Activated B cell treated with CpG ODN at 0.5 μM for 24 hours (primary cell): ENCODE measurements at regions of chr9 and their contacts with region 1.

Region 1: GRCh38 chr9:27573634-27574590 is 631 bp upstream of the C9orf72 start:
- DNase-seq: peak; percentile 77
- ATAC-seq: peak; percentile 88
- H3K4me3 Mint-ChIP-seq: peak overlapping the region; percentile 97
- H3K27ac Mint-ChIP-seq: peak overlapping the region; percentile 99
- H3K4me1 Mint-ChIP-seq: peaks cover 24% of the 10 kb centered on the region
- H3K27me3 Mint-ChIP-seq: no peaks in the 10 kb centered on the region
- CTCF ChIP-seq: no peak

Region 2: GRCh38 chr9:26296910-26297572 is 1276.9 kb before region 1 on chr9:
- CTCF ChIA-PET with region 1: no interaction called
- POLR2A ChIA-PET with region 1: no interaction called
- intact Hi-C with region 1: no loop called
- DNase-seq: no peak
- ATAC-seq: no peak
- H3K4me3 Mint-ChIP-seq: no peak overlapping the region
- H3K27ac Mint-ChIP-seq: no peak overlapping the region
- H3K4me1 Mint-ChIP-seq: no peaks in the 10 kb centered on the region
- H3K27me3 Mint-ChIP-seq: no peaks in the 10 kb centered on the region
- CTCF ChIP-seq: no peak

Region 3: DNA sequence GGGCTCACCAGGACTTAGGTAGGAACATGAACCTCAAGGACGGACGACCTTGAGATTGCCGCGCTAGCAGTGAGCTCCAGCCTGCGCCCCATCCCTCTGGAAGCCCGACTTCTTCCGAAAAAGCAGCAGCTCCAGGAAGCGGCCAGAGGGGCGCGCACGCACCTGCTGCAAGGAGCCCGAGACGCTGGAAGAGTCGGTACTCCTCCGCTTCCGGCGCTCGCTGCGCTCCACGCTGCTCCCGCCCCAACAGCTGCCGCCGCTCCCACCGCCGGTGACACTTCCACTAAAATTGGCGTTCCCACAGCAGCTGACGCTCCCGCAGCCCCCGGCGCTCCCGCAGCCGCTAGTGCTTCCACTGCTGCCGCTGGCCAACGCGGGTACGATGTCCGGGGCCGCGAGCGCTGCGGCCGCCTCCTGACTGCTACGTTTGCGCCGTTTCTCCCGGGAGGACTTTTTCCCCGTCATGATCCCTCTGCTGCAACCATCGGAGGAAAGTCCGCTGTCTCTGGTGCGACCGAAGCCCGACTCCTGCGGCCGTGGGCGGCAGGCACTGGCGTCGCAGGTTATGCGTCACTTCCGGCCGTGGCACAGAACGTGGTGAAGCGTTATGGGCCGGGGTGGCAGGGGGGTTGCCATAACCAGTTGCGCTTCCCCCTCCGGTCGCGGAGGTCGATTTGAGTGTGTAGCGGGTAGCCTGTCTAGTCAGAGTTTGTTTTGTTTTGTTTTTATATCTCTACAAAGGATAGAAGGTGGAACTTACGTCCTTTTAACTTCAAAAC is 681.5 kb before region 1 on chr9 and contains the start of gene CAAP1:
- CTCF ChIA-PET with region 1: no interaction called
- POLR2A ChIA-PET with region 1: no interaction called
- intact Hi-C with region 1: loop called (anchors 2 kb)
- DNase-seq: peak; percentile 87
- ATAC-seq: peak; percentile 96
- H3K4me3 Mint-ChIP-seq: peak within 1 kb of the TSS; percentile 100
- H3K27ac Mint-ChIP-seq: peak within 1 kb of the TSS; percentile 98
- H3K4me1 Mint-ChIP-seq: peaks cover 44% of the 10 kb centered on the region
- H3K27me3 Mint-ChIP-seq: no peaks in the 10 kb centered on the region
- CTCF ChIP-seq: no peak
- total RNA-seq, gene CAAP1: 15.1 and 16.6 TPM in 2 replicates

Region 4: GRCh38 chr9:27162045-27162444 is 411.9 kb before region 1 on chr9:
- CTCF ChIA-PET with region 1: no interaction called
- POLR2A ChIA-PET with region 1: no interaction called
- intact Hi-C with region 1: no loop called
- DNase-seq: no peak
- ATAC-seq: no peak
- H3K4me3 Mint-ChIP-seq: no peak overlapping the region
- H3K27ac Mint-ChIP-seq: no peak overlapping the region
- H3K4me1 Mint-ChIP-seq: no peaks in the 10 kb centered on the region
- H3K27me3 Mint-ChIP-seq: peaks cover 2% of the 10 kb centered on the region
- CTCF ChIP-seq: no peak

Region 5: GRCh38 chr9:27489087-27489876 is 84.6 kb before region 1 on chr9:
- CTCF ChIA-PET with region 1: no interaction called
- POLR2A ChIA-PET with region 1: interaction called, 4 read pairs
- intact Hi-C with region 1: loop called (anchors 1 kb)
- DNase-seq: no peak
- ATAC-seq: peak; percentile 40
- H3K4me3 Mint-ChIP-seq: peak overlapping the region; percentile 20
- H3K27ac Mint-ChIP-seq: peak overlapping the region; percentile 46
- H3K4me1 Mint-ChIP-seq: peaks cover 78% of the 10 kb centered on the region
- H3K27me3 Mint-ChIP-seq: no peaks in the 10 kb centered on the region
- CTCF ChIP-seq: no peak

Region 6: GRCh38 chr9:27586304-27586703 is 12.4 kb after region 1 on chr9:
- CTCF ChIA-PET with region 1: no interaction called
- POLR2A ChIA-PET with region 1: interaction called, 13 read pairs
- intact Hi-C with region 1: loop called (anchors 1 kb)
- DNase-seq: no peak
- ATAC-seq: no peak
- H3K4me3 Mint-ChIP-seq: no peak overlapping the region
- H3K27ac Mint-ChIP-seq: no peak overlapping the region
- H3K4me1 Mint-ChIP-seq: peaks cover 25% of the 10 kb centered on the region
- H3K27me3 Mint-ChIP-seq: peaks cover 5% of the 10 kb centered on the region
- CTCF ChIP-seq: no peak

Region 7: GRCh38 chr9:27701587-27701986 is 127.7 kb after region 1 on chr9:
- CTCF ChIA-PET with region 1: no interaction called
- POLR2A ChIA-PET with region 1: no interaction called
- intact Hi-C with region 1: no loop called
- DNase-seq: no peak
- ATAC-seq: no peak
- H3K4me3 Mint-ChIP-seq: no peak overlapping the region
- H3K27ac Mint-ChIP-seq: no peak overlapping the region
- H3K4me1 Mint-ChIP-seq: no peaks in the 10 kb centered on the region
- H3K27me3 Mint-ChIP-seq: no peaks in the 10 kb centered on the region
- CTCF ChIP-seq: no peak